Right lobe of liver (tissue), 6 donors: ENCODE measurements at regions of chr4 and their contacts with region 1.

Region 1: GRCh38 chr4:105146276-105147015 is at the start of gene TET2:
- DNase-seq: peak; percentile 82 to 86 (median 86)
- ATAC-seq: peak; percentile 79 to 87 (median 80)
- H3K4me3 ChIP-seq: peak within 1 kb of the TSS; percentile 67 to 76 (median 69)
- H3K27ac ChIP-seq: peak within 1 kb of the TSS; percentile 79 to 90 (median 81)
- H3K4me1 ChIP-seq: peaks cover 0 to 28% (median 7%) of the 10 kb centered on the region in 4 donors
- H3K27me3 ChIP-seq: no peaks in the 10 kb centered on the region
- CTCF ChIP-seq: no peak
- POLR2A ChIP-seq: peak; percentile 81
- total RNA-seq, gene TET2: 5.8 to 8.8 (median 7.0) TPM

Region 2: DNA sequence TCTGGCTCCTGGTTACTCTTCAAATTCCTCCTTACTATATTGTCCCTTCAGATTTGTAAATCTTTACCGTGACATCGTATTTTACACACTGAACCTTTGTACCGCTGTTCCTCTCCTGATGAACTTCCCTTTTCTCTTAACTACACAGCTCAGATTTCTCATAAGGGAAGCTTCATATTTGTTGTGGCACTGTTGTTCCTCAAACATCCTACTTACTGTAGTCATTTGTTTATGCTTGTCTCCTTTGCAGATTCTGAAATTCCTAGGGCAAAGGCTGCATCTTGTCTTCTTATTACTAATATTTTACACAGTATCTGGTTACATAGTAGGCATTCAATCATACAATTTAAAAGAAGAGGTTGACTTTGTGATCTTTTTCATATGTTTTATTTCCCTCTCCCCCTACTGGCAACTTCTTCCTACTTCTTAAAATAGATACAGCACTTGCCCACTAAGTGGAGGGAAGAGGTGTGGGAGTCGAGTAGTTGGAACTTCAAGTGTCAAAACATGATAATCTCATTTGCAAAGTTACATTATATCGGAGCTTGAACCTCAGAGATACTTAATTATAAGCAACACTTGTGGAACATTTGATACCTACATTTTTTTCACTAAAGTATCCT is 50.2 kb after region 1 on chr4:
- intact Hi-C with region 1: no loop called
- DNase-seq: no peak
- ATAC-seq: peak; percentile 55 to 70 (median 62)
- H3K4me3 ChIP-seq: no peak overlapping the region
- H3K27ac ChIP-seq: no peak overlapping the region
- H3K4me1 ChIP-seq: peaks cover 0 to 9% (median 0%) of the 10 kb centered on the region in 4 donors
- H3K27me3 ChIP-seq: no peaks in the 10 kb centered on the region
- CTCF ChIP-seq: peak; percentile 17 to 22 (median 18)
- POLR2A ChIP-seq: no peak

Region 3: GRCh38 chr4:105471566-105472176 is 325.2 kb after region 1 on chr4:
- intact Hi-C with region 1: loop called in 1 of 2 experiments (anchors 5 kb)
- DNase-seq: peak; percentile 43 to 75 (median 51)
- ATAC-seq: peak; percentile 43 to 61 (median 58)
- H3K4me3 ChIP-seq: no peak overlapping the region
- H3K27ac ChIP-seq: no peak overlapping the region
- H3K4me1 ChIP-seq: peaks cover 2 to 29% (median 6%) of the 10 kb centered on the region in 4 donors
- H3K27me3 ChIP-seq: no peaks in the 10 kb centered on the region
- CTCF ChIP-seq: peak; percentile 68 to 78 (median 71)
- POLR2A ChIP-seq: no peak